Mucosa of descending colon (tissue), 3 donors: ENCODE measurements at regions of chrX and their contacts with region 1.

Region 1: DNA sequence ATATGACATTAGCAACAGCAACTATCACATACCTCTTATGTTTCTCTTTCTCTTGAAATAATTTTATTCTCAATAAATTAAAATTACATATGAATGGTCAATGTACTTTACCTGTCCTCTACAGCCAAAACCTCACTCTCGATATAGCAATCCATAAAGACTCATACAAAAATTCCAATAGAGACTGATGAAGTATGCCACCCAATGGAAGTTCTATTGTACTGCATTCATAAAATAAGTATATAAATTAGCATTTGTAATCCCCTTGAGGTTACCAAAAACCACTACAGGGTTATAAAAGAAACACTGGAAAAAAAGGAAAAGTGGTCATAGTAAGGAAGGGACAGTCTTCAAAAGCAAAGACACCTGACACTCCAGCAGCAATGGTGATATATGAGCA is 32.8 kb downstream of the CLDN2 start:
- DNase-seq: no peak
- ATAC-seq: peak; percentile 50
- H3K4me3 ChIP-seq: no peak overlapping the region
- H3K4me1 ChIP-seq: no peaks in the 10 kb centered on the region
- CTCF ChIP-seq: no peak

Region 2: DNA sequence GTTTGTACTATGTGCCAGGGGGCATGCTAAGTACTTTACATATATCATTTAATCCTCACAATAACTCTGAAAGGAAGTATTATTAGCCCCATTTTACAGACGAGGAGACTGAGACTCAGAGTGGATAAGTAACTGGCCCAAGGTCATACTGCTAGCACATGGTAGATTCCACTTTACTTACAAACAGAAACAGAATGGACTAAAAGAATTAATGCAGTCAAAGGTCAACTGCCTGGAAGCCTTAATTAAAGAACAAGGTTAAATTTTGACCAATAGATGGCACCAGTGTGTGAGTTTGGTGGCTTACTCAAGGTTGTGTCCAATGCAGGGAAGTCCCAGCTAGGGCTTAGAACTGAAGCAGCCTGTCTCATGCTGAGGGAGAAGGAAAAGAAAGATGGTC is 54.5 kb before region 1 on chrX:
- intact Hi-C with region 1: loop called in 1 of 2 experiments (anchors 5 kb)
- DNase-seq: peak in 1 of 3 donors; percentile 16
- ATAC-seq: peak; percentile 75
- H3K4me3 ChIP-seq: no peak overlapping the region
- H3K4me1 ChIP-seq: no peaks in the 10 kb centered on the region
- CTCF ChIP-seq: no peak